ENCODE measurements at regions of chr10 and their contacts with region 1.

Region 1: GRCh38 chr10:4767033-4767814 is 58.8 kb upstream of the AKR1E2 start:
- DNase-seq: peak; percentile 74
- H3K4me3 ChIP-seq: no peak overlapping the region
- H3K27ac ChIP-seq: peak overlapping the region; percentile 96
- H3K4me1 ChIP-seq: peaks cover 83% of the 10 kb centered on the region
- H3K27me3 ChIP-seq: no peaks in the 10 kb centered on the region
- CTCF ChIP-seq: peak; percentile 49 to 50
- POLR2A ChIP-seq: no peak

Region 2: GRCh38 chr10:3467052-3467951 is 1299.9 kb before region 1 on chr10:
- CTCF ChIA-PET with region 1: no interaction called
- POLR2A ChIA-PET with region 1: no interaction called
- dilution Hi-C with region 1: no loop called
- intact Hi-C with region 1: loop called (anchors 1 kb)
- DNase-seq: peak; percentile 99
- H3K4me3 ChIP-seq: peak overlapping the region in 1 of 3 experiments; percentile 45
- H3K27ac ChIP-seq: peak overlapping the region; percentile 100
- H3K4me1 ChIP-seq: peaks cover 44% of the 10 kb centered on the region
- H3K27me3 ChIP-seq: no peaks in the 10 kb centered on the region
- CTCF ChIP-seq: peak; percentile 63 to 71
- POLR2A ChIP-seq: peak; percentile 18

Region 3: GRCh38 chr10:3924344-3924743 is 842.9 kb before region 1 on chr10:
- CTCF ChIA-PET with region 1: interaction called, 4 read pairs
- POLR2A ChIA-PET with region 1: no interaction called
- dilution Hi-C with region 1: no loop called
- intact Hi-C with region 1: loop called (anchors 1 kb)
- DNase-seq: peak; percentile 98
- H3K4me3 ChIP-seq: no peak overlapping the region
- H3K27ac ChIP-seq: peak overlapping the region; percentile 99
- H3K4me1 ChIP-seq: peaks cover 29% of the 10 kb centered on the region
- H3K27me3 ChIP-seq: no peaks in the 10 kb centered on the region
- CTCF ChIP-seq: no peak
- POLR2A ChIP-seq: peak; percentile 32

Region 4: DNA sequence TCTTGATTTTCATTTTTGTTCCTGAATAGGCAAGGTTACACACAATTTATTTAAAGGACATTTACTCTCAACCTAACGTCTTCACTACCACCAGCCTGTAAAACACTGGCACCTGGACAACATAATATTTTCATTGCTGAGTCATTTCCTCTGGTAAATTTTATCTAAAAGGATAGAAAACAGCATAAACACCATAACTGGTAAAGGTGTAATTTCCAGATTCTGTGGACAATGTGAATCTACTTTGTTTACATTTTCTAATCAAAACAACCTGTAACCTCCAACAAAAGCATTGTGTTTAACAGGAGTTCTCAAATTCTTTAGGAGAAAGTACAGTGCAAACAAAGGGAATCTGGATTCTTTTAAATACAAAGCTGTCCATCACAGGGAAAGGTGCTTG is 413.3 kb before region 1 on chr10:
- CTCF ChIA-PET with region 1: no interaction called
- POLR2A ChIA-PET with region 1: no interaction called
- dilution Hi-C with region 1: no loop called
- intact Hi-C with region 1: loop called (anchors 1 kb)
- DNase-seq: peak; percentile 96
- H3K4me3 ChIP-seq: no peak overlapping the region
- H3K27ac ChIP-seq: peak overlapping the region; percentile 94
- H3K4me1 ChIP-seq: peaks cover 46% of the 10 kb centered on the region
- H3K27me3 ChIP-seq: no peaks in the 10 kb centered on the region
- CTCF ChIP-seq: no peak
- POLR2A ChIP-seq: no peak

Region 5: DNA sequence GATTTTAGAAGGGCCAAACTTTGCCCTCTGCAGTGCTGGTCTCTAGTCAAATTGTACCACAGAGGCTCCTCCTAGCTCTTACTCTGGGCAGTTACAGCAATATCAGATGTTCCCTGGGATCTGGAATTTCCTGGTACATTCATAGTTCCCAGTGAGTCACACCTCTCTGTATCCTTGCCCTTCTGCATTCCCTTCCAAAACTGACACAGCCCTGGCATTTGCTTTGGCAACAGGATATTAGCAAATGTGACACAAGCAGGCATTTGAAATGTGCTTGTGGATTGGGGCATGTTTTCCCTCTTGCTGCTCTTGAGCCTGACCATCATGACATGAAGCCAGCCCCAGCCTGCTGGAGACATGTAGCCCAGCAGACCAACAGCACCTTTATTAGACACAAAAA is 225.9 kb before region 1 on chr10:
- CTCF ChIA-PET with region 1: interaction called, 3 read pairs
- POLR2A ChIA-PET with region 1: no interaction called
- dilution Hi-C with region 1: no loop called
- intact Hi-C with region 1: loop called (anchors 1 kb)
- DNase-seq: peak; percentile 94
- H3K4me3 ChIP-seq: no peak overlapping the region
- H3K27ac ChIP-seq: peak overlapping the region; percentile 93
- H3K4me1 ChIP-seq: peaks cover 10% of the 10 kb centered on the region
- H3K27me3 ChIP-seq: no peaks in the 10 kb centered on the region
- CTCF ChIP-seq: peak in 1 of 2 donors; percentile 18
- POLR2A ChIP-seq: no peak

Region 6: GRCh38 chr10:4780782-4781181 is 13.6 kb after region 1 on chr10:
- CTCF ChIA-PET with region 1: interaction called, 39 read pairs
- POLR2A ChIA-PET with region 1: interaction called, 7 read pairs
- dilution Hi-C with region 1: no loop called
- intact Hi-C with region 1: loop called (anchors 1 kb)
- DNase-seq: peak; percentile 94
- H3K4me3 ChIP-seq: peak overlapping the region in 1 of 3 experiments; percentile 64
- H3K27ac ChIP-seq: peak overlapping the region; percentile 75
- H3K4me1 ChIP-seq: peaks cover 47% of the 10 kb centered on the region
- H3K27me3 ChIP-seq: no peaks in the 10 kb centered on the region
- CTCF ChIP-seq: no peak
- POLR2A ChIP-seq: peak; percentile 61